GM12878 (cell line): ENCODE measurements at regions of chr12 and their contacts with region 1.

Region 1: DNA sequence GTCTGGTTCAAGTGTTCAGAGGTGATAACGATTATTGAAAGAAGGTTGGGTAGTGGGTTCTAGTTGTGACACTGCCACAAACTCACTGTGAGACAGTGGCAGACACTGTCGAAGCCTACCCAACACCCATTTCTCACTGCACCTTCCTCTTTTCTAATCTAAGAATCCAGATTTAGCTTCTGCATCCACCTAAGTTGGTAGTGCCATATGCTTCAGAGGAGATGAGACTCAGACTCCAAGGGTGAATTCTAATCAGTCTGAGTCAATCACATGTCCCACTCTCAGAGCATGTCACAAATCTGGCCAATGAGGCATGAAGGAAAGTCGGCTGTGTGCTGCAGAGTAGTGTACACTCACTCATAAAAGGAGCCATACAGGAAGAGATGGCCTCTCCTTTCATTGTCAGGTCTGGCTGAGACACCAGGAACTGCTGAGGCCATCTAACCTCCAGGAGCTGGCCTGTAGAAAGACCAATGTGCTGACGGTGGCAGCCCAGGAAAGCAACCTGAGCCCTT is 102.1 kb upstream of the RAP1B start:
- DNase-seq: no peak
- ATAC-seq: no peak; the same call in 2 of the 3 replicates
- H3K4me3 ChIP-seq: no peak overlapping the region
- H3K27ac ChIP-seq: no peak overlapping the region
- H3K4me1 ChIP-seq: no peaks in the 10 kb centered on the region
- H3K27me3 ChIP-seq: no peaks in the 10 kb centered on the region
- CTCF ChIP-seq: no peak
- EP300 ChIP-seq: no peak
- POLR2A ChIP-seq: no peak
- RAD21 ChIP-seq: no peak

Region 2: GRCh38 chr12:68331869-68332727 is 176.5 kb before region 1 on chr12 and contains the start of gene MDM1:
- CTCF ChIA-PET with region 1: no interaction called
- POLR2A ChIA-PET with region 1: no interaction called
- RAD21 ChIA-PET with region 1: no interaction called
- SMC1A ChIA-PET with region 1: no interaction called
- in situ Hi-C with region 1: no loop called
- intact Hi-C with region 1: no loop called
- DNase-seq: peak; percentile 92
- ATAC-seq: peak; percentile 98
- H3K4me3 ChIP-seq: peak within 1 kb of the TSS; percentile 83
- H3K27ac ChIP-seq: peak within 1 kb of the TSS; percentile 57
- H3K4me1 ChIP-seq: no peaks in the 10 kb centered on the region
- H3K27me3 ChIP-seq: no peaks in the 10 kb centered on the region
- CTCF ChIP-seq: no peak
- EP300 ChIP-seq: no peak
- POLR2A ChIP-seq: peak; percentile 82
- RAD21 ChIP-seq: no peak
- polyA plus RNA-seq, gene MDM1: 10.1 to 10.6 TPM

Region 3: GRCh38 chr12:68497702-68498101 is 10.9 kb before region 1 on chr12:
- CTCF ChIA-PET with region 1: interaction called, 4 read pairs
- POLR2A ChIA-PET with region 1: interaction called, 10 read pairs
- RAD21 ChIA-PET with region 1: interaction called, 5 read pairs
- SMC1A ChIA-PET with region 1: interaction called, 37 read pairs
- in situ Hi-C with region 1: no loop called
- intact Hi-C with region 1: no loop called
- DNase-seq: peak; percentile 50
- ATAC-seq: peak; percentile 82
- H3K4me3 ChIP-seq: no peak overlapping the region
- H3K27ac ChIP-seq: no peak overlapping the region
- H3K4me1 ChIP-seq: peaks cover 27% of the 10 kb centered on the region
- H3K27me3 ChIP-seq: no peaks in the 10 kb centered on the region
- CTCF ChIP-seq: no peak
- EP300 ChIP-seq: no peak
- POLR2A ChIP-seq: no peak
- RAD21 ChIP-seq: no peak